Sigmoid colon (tissue), 7 donors: ENCODE measurements at regions of chr11 and their contacts with region 1.

Region 1: GRCh38 chr11:43327987-43328386 is 16.2 kb downstream of the API5 start:
- DNase-seq: no peak
- H3K4me3 ChIP-seq: no peak overlapping the region
- H3K27ac ChIP-seq: no peak overlapping the region
- H3K4me1 ChIP-seq: no peaks in the 10 kb centered on the region
- H3K27me3 ChIP-seq: no peaks in the 10 kb centered on the region
- CTCF ChIP-seq: no peak
- EP300 ChIP-seq: no peak
- POLR2A ChIP-seq: no peak

Region 2: DNA sequence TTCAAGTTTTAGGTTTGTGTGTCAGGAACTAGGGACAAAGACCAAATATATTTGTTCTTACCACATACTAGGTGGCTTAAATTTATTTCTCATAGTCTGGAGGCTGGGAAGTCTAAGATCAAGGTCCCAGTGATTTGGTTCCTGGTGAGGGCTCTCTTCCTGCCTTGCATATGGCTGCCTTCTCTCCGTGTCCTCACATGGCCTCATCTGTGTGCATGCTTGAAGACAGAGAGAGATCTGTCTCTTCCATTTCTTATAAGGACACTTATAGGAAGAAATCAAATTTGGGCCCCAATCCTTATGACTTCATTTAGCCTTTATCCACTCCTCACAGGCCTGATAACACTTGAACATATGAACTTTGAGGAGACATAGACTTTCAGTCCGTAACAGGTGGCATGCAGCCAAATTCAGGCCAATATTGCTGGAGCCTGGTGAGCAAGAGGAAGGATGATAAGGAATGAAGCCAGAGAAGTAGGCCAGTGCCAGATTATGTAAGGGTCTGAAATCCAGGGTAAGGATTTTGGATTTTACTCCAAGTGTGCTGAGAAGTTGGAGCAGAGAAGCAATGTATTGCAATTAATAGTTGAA is 65.9 kb after region 1 on chr11:
- intact Hi-C with region 1: loop called (anchors 10 kb)
- DNase-seq: no peak
- H3K4me3 ChIP-seq: no peak overlapping the region
- H3K27ac ChIP-seq: no peak overlapping the region
- H3K4me1 ChIP-seq: no peaks in the 10 kb centered on the region
- H3K27me3 ChIP-seq: no peaks in the 10 kb centered on the region
- CTCF ChIP-seq: no peak
- EP300 ChIP-seq: no peak
- POLR2A ChIP-seq: no peak

Region 3: GRCh38 chr11:43419460-43419859 is 91.5 kb after region 1 on chr11:
- intact Hi-C with region 1: loop called (anchors 5 kb)
- DNase-seq: no peak
- H3K4me3 ChIP-seq: no peak overlapping the region
- H3K27ac ChIP-seq: no peak overlapping the region
- H3K4me1 ChIP-seq: no peaks in the 10 kb centered on the region
- H3K27me3 ChIP-seq: no peaks in the 10 kb centered on the region
- CTCF ChIP-seq: peak in 3 of 4 experiments; percentile 36 to 39 (median 37)
- EP300 ChIP-seq: no peak
- POLR2A ChIP-seq: no peak